GM12878 (cell line): ENCODE measurements at regions of chrX and their contacts with region 1.

Region 1: DNA sequence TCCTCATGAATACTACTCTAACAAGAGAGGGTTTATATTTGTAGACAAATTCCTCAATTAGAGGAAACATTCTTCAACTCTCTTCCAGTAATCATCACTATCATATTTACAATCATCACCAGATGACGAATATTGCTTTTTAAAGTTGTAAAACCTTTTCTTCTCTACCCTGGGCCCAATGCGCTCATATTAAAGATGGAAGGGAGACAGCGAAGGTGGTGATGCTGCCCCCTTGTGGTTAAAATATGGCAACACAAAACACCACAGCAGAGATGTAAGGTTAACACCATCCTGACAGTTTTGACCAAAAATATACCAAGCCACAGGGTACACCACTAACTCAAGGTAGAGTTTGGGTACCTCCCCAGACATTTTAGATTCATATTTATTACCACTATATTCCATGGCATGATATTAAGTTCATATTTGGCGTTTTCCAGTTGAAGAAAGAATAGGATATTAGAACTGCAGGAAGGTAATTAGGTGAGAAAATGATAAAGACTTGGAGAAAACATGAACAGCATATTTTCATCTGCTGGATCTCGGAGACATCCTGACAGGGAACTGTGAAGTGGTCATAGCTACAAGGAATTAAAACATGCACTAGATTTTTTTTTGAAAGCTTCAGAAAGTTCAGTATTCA is 72.8 kb downstream of the SLC9A7 start:
- DNase-seq: no peak
- ATAC-seq: peak; percentile 87
- H3K4me3 ChIP-seq: no peak overlapping the region
- H3K27ac ChIP-seq: no peak overlapping the region
- H3K4me1 ChIP-seq: peaks cover 19% of the 10 kb centered on the region
- H3K27me3 ChIP-seq: no peaks in the 10 kb centered on the region
- CTCF ChIP-seq: peak; percentile 61 to 79 (median 63)
- EP300 ChIP-seq: no peak
- POLR2A ChIP-seq: no peak
- RAD21 ChIP-seq: peak; percentile 70

Region 2: GRCh38 chrX:46561824-46562657 is 124.1 kb before region 1 on chrX:
- CTCF ChIA-PET with region 1: interaction called, 7 read pairs
- POLR2A ChIA-PET with region 1: interaction called, 4 read pairs
- RAD21 ChIA-PET with region 1: interaction called, 5 read pairs
- SMC1A ChIA-PET with region 1: interaction called, 14 read pairs
- in situ Hi-C with region 1: no loop called
- intact Hi-C with region 1: loop called (anchors 5 kb)
- DNase-seq: peak; percentile 95
- ATAC-seq: peak; percentile 99
- H3K4me3 ChIP-seq: peak overlapping the region; percentile 4; the same call in 1 of the 2 replicates
- H3K27ac ChIP-seq: peak overlapping the region; percentile 62
- H3K4me1 ChIP-seq: peaks cover 20% of the 10 kb centered on the region
- H3K27me3 ChIP-seq: no peaks in the 10 kb centered on the region
- CTCF ChIP-seq: no peak
- EP300 ChIP-seq: peak; percentile 70 to 94
- POLR2A ChIP-seq: no peak
- RAD21 ChIP-seq: 0 out of 2 replicates have a peak, but pooled peaks have one; percentile 6

Region 3: DNA sequence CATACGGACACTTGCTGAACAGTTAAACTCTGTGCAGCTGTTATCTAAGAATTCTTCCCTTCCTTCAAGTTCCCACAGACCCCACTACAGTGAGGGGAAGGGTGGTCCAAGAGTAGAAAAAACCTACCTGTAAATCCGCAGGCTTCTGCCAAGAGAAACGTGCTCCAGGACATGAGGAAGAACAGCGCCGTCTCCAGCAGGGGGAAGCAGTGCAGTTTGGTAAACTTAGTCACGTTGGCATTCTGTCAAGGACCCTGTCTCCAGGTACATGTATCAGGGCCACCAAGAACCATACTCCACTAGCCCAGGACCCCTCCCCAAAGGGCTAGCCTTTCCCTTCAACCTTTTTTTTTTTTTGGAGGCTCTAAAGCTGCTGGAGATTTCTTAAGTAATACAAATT is 32.6 kb before region 1 on chrX:
- CTCF ChIA-PET with region 1: interaction called, 24 read pairs
- POLR2A ChIA-PET with region 1: interaction called, 4 read pairs
- RAD21 ChIA-PET with region 1: interaction called, 6 read pairs
- SMC1A ChIA-PET with region 1: interaction called, 14 read pairs
- in situ Hi-C with region 1: no loop called
- intact Hi-C with region 1: loop called (anchors 5 kb)
- DNase-seq: no peak
- ATAC-seq: peak; percentile 67
- H3K4me3 ChIP-seq: no peak overlapping the region
- H3K27ac ChIP-seq: peak overlapping the region; percentile 62
- H3K4me1 ChIP-seq: peaks cover 16% of the 10 kb centered on the region
- H3K27me3 ChIP-seq: no peaks in the 10 kb centered on the region
- CTCF ChIP-seq: peak; percentile 46 to 52 (median 48); a peak in 5 of 6 replicates
- EP300 ChIP-seq: no peak
- POLR2A ChIP-seq: no peak
- RAD21 ChIP-seq: peak; percentile 55

Region 4: DNA sequence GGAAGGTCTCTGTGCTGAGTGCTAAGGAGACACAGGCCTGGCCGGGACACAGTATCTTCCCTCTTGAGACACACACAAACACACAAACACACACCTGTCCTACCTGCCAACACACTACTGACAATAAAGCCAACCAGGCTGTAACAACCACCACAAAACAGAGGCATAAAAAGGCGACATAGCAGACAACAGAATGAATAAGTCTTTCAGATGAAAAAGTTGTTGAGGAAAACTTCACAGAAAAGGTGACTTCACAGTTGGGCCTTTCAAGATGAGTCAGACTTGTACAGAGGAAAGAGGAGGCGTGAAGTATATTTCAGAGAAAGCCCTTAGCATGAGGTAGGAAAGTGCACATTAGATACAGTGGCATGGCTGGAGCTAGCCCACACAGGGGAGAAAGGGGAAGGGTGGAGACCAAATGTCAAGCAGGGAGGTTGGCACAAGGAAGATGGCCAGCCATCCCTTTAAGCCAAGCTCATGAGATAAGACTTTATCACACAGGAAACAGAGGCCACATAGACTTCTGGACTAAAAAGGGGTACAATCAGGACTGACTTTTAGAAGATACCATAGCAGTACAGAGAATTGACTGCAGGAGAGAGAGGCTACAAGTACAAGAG is 18.8 kb after region 1 on chrX:
- CTCF ChIA-PET with region 1: interaction called, 38 read pairs
- POLR2A ChIA-PET with region 1: interaction called, 10 read pairs
- RAD21 ChIA-PET with region 1: interaction called, 30 read pairs
- SMC1A ChIA-PET with region 1: interaction called, 107 read pairs
- in situ Hi-C with region 1: no loop called
- intact Hi-C with region 1: no loop called
- DNase-seq: peak; percentile 83
- ATAC-seq: peak; percentile 96
- H3K4me3 ChIP-seq: 0 out of 2 replicates have a peak overlapping the region, but pooled peaks have one; percentile 4
- H3K27ac ChIP-seq: peak overlapping the region; percentile 92
- H3K4me1 ChIP-seq: peaks cover 51% of the 10 kb centered on the region
- H3K27me3 ChIP-seq: no peaks in the 10 kb centered on the region
- CTCF ChIP-seq: no peak
- EP300 ChIP-seq: peak; percentile 83 to 97; a peak in 3 of 4 replicates
- POLR2A ChIP-seq: peak; percentile 44; the same call in 1 of the 2 replicates
- RAD21 ChIP-seq: 0 out of 2 replicates have a peak, but pooled peaks have one; percentile 5